GM12878 (cell line): ENCODE measurements at regions of chr9 and their contacts with region 1.

Region 1: GRCh38 chr9:112361601-112362000 is 18.3 kb upstream of the HSDL2 start:
- DNase-seq: no peak
- ATAC-seq: peak; percentile 71
- H3K4me3 ChIP-seq: no peak overlapping the region
- H3K27ac ChIP-seq: no peak overlapping the region
- H3K4me1 ChIP-seq: no peaks in the 10 kb centered on the region
- H3K27me3 ChIP-seq: no peaks in the 10 kb centered on the region
- CTCF ChIP-seq: peak in 2 of 3 experiments; percentile 30 to 55; a peak in 2 of 6 replicates
- EP300 ChIP-seq: no peak
- POLR2A ChIP-seq: no peak
- RAD21 ChIP-seq: peak; percentile 60

Region 2: DNA sequence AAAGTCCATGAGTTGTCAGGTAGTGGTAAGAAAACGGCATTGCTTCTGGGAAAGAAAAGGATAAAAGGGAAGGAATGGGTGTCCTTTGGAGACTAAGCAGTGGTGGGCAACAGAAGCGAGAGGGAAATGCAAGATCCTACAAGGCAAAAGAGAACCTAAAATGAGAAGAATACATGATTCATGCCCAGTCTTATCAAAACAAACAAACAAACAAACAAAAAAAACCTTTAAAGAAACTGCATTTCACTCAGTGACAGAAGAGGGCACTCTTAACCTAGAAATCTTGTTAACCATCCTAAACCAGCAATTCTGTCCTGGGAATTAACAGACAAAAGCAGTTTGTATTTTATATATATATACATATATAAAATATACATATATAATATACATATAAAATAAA is 275.0 kb before region 1 on chr9:
- CTCF ChIA-PET with region 1: interaction called, 104 read pairs
- POLR2A ChIA-PET with region 1: interaction called, 3 read pairs
- RAD21 ChIA-PET with region 1: interaction called, 13 read pairs
- SMC1A ChIA-PET with region 1: interaction called, 56 read pairs
- in situ Hi-C with region 1: loop called (anchors 5 kb)
- intact Hi-C with region 1: loop called (anchors 1 kb)
- DNase-seq: no peak
- ATAC-seq: peak; percentile 36; the same call in 1 of the 3 replicates
- H3K4me3 ChIP-seq: no peak overlapping the region
- H3K27ac ChIP-seq: no peak overlapping the region
- H3K4me1 ChIP-seq: no peaks in the 10 kb centered on the region; the same call in 1 of the 2 replicates
- H3K27me3 ChIP-seq: no peaks in the 10 kb centered on the region
- CTCF ChIP-seq: peak; percentile 47 to 59 (median 51); a peak in 5 of 6 replicates
- EP300 ChIP-seq: no peak
- POLR2A ChIP-seq: no peak
- RAD21 ChIP-seq: peak; percentile 83

Region 3: DNA sequence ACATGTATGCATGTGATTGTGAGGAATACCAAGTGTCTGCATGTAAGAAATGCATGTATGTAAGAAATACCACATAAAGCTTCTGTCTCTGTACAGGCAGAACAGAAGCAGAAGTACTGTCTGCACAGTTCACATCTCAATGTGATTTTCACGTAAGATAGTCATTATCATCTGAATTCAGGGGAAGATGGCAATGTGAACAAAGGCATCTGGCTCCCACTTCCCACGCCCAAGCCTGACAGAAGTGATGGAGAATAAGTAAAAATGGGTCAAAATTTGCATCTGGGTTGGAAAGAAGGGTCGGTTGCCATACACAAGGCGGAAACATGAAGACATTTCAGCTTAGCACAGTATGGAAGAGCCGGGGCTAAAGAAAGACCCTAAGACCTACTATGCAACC is 258.2 kb before region 1 on chr9:
- CTCF ChIA-PET with region 1: interaction called, 135 read pairs
- POLR2A ChIA-PET with region 1: no interaction called
- RAD21 ChIA-PET with region 1: interaction called, 27 read pairs
- SMC1A ChIA-PET with region 1: interaction called, 86 read pairs
- in situ Hi-C with region 1: no loop called
- intact Hi-C with region 1: no loop called
- DNase-seq: no peak
- ATAC-seq: no peak
- H3K4me3 ChIP-seq: no peak overlapping the region
- H3K27ac ChIP-seq: no peak overlapping the region
- H3K4me1 ChIP-seq: peaks cover 4% of the 10 kb centered on the region
- H3K27me3 ChIP-seq: no peaks in the 10 kb centered on the region
- CTCF ChIP-seq: no peak
- EP300 ChIP-seq: no peak
- POLR2A ChIP-seq: no peak
- RAD21 ChIP-seq: no peak

Region 4: DNA sequence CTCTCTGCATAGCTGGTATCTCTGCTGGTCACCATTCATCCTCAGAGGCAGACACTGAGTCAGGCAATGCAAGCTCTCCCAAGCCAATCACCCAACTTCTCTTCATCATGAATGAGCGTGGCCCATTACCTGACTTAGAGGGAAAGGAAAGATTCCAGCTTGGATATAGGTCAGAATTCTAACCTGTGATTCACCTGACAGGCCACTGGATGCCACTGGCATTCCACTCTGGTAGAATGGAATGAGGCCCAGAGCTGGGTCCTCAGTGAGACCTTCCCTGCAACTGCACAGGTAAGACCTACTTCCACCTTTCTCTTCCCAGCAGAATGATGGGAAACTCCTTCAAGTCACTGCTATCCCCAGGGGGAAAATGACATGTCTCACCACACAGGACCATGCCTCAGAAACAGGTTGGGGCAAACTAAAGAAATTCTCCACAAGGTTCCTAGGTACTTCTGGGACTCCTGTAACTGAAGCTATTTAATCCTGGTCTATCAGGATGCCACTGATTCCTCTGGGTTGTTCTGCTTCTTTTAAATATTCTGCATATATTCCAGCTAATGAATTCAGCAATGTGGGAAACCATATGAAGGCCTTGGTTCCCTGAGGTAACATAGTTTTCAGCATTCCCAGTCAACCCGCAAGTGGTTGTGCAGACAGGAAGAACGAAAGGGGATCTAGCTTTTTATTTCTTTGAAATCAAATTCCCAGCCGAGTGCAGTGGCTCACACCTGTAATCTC is 248.5 kb before region 1 on chr9:
- CTCF ChIA-PET with region 1: interaction called, 52 read pairs
- POLR2A ChIA-PET with region 1: no interaction called
- RAD21 ChIA-PET with region 1: interaction called, 23 read pairs
- SMC1A ChIA-PET with region 1: interaction called, 28 read pairs
- in situ Hi-C with region 1: no loop called
- intact Hi-C with region 1: loop called (anchors 1 kb)
- DNase-seq: no peak
- ATAC-seq: peak; percentile 75
- H3K4me3 ChIP-seq: no peak overlapping the region
- H3K27ac ChIP-seq: no peak overlapping the region
- H3K4me1 ChIP-seq: no peaks in the 10 kb centered on the region
- H3K27me3 ChIP-seq: no peaks in the 10 kb centered on the region
- CTCF ChIP-seq: peak; percentile 56 to 74 (median 57); a peak in 5 of 6 replicates
- EP300 ChIP-seq: no peak
- POLR2A ChIP-seq: no peak
- RAD21 ChIP-seq: peak; percentile 88

Region 5: DNA sequence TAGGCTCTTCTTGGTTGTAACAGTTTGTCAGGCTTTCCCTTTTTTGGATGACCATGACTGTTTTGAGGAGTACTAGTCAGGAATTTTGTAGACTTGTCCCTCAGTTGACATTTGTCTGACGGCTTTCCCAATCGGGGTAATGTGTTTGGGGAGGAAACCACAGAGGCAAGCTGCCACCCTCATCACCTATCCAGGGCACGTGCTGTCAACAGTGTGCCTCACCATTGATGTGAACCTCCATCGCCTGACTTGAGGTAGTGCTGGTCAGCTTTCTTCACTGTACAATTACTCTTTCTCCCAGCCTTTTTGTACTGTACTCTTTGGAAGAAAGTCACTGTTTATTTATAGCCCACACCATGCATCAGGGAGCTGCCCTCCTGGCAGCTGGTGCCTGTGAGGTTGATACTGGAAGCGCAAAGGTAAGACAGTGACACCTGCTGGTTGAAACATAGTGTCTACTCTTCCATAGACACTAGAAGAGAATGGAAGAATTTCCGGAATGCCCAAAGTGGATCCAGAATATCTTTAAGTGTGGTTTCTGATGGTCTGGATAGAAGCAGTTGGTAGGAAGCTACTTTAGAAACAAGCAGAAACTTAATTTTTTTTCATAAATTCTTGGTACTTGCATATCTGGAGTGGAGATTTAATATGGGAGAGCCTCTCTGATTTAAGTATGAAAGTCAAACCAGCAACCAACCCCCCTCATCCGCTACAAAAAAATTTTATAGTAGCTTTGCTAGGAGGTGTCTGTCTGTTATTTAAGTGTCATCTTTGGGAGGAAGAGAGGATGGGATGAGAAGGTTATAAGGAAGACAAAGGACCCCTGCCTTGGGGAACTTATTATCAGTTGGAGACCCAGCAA is 458.3 kb after region 1 on chr9:
- CTCF ChIA-PET with region 1: interaction called, 11 read pairs
- POLR2A ChIA-PET with region 1: no interaction called
- RAD21 ChIA-PET with region 1: interaction called, 4 read pairs
- SMC1A ChIA-PET with region 1: interaction called, 3 read pairs
- in situ Hi-C with region 1: no loop called
- intact Hi-C with region 1: no loop called
- DNase-seq: peak; percentile 26
- ATAC-seq: peak; percentile 96
- H3K4me3 ChIP-seq: no peak overlapping the region
- H3K27ac ChIP-seq: no peak overlapping the region
- H3K4me1 ChIP-seq: peaks cover 13% of the 10 kb centered on the region
- H3K27me3 ChIP-seq: no peaks in the 10 kb centered on the region; a peak in 2 of 4 replicates
- CTCF ChIP-seq: peak; percentile 69 to 76 (median 76)
- EP300 ChIP-seq: no peak
- POLR2A ChIP-seq: no peak
- RAD21 ChIP-seq: peak; percentile 85